Naive thymus-derived CD8-positive, alpha-beta T cell (primary cell): ENCODE measurements at regions of chr1 and their contacts with region 1.

Region 1: DNA sequence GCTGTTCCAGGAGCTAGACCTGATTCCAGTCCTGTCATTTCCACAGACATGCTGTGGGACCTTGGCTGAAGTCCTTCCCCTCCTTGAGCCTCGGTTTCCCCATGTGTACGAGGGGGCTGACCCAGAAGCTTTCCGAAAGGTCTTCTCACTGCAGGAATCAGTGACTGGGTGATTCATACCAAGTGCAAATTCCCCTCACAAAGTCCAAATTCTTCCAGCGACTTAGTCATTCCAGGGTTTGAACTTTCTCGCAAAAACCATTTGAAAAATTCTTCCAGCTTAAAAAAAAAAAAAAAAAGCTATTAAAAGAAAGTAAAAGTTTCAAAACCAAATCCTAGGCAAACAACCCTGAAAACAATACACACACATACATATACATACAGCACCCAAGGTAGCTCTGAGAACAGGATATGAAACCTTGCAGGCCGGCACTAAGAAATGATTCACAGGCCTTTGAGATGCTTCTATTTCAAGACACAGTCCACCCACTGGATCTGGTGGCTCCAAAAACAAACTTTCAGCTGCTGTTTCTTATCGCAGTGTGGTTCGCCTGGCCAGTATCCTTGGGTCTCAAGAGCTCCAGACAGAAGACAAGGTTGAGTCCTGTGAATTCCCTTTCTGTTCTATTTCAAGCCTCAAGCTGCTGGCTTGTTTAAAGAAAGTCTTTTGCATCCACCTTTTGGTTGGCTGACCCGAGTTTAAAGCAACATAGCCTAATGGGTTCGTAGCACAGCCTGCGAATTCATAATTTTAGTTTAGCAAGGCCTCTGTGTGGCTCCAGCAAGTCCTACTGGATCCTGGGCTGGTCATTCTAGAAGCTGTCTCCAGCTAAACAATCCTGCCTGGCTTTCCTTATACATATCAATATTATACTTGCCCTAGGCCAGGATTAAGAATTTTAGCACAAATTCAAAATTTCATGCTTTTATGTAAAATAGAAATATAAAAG is 18.0 kb upstream of the ID3 start:
- DNase-seq: no peak
- ATAC-seq: peak; percentile 68 to 78
- H3K4me3 Mint-ChIP-seq: peak overlapping the region; percentile 21 to 65 (median 58)
- H3K27ac Mint-ChIP-seq: peak overlapping the region; percentile 70 to 94 (median 86)
- H3K4me1 Mint-ChIP-seq: peaks cover 28 to 74% (median 69%) of the 10 kb centered on the region in 4 donors
- H3K27me3 Mint-ChIP-seq: no peaks in the 10 kb centered on the region

Region 2: DNA sequence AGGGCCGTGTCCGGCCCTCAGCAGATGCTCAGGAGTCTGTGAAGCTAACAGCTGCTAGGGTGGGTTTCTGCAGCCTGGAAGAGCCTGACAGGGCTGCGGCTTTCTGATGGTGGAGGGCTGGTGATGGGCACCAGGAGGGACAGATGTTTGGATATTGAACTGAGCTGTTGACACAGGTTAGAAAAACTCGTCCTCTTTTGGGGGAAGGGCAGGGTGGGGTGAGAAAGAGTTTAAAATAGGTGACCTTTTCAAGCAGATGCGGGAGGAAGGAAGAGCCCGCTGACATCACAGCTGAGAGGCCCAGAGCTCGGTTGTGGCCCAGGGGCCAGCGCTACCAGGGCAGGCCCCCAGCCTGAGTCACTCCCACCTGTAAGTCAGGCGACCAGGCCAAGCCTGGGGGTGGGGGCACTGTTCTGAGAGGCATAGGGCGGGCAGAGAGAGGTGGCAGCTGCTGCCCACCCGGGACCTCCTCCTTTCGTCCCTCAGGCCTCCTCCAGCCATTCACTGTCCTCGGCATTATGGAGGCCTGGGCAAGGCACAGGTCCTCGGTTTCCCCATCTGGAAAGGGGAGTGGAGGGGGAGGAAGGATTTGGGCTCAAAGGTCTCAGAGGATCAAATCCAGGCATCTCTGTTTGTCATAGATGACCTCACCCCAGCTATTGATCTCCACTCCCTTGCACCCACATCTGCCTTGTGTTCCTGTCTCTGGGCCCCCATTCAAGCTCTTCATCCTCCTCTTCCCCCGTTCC is 14.3 kb after region 1 on chr1:
- POLR2A ChIA-PET with region 1: interaction called, 44 read pairs
- DNase-seq: peak in 2 of 10 donors; percentile 49 to 79
- ATAC-seq: peak; percentile 43 to 60
- H3K4me3 Mint-ChIP-seq: peak overlapping the region; percentile 6 to 70 (median 58)
- H3K27ac Mint-ChIP-seq: peak overlapping the region; percentile 67 to 95 (median 84)
- H3K4me1 Mint-ChIP-seq: peaks cover 38 to 84% (median 71%) of the 10 kb centered on the region in 4 donors
- H3K27me3 Mint-ChIP-seq: no peaks in the 10 kb centered on the region

Region 3: DNA sequence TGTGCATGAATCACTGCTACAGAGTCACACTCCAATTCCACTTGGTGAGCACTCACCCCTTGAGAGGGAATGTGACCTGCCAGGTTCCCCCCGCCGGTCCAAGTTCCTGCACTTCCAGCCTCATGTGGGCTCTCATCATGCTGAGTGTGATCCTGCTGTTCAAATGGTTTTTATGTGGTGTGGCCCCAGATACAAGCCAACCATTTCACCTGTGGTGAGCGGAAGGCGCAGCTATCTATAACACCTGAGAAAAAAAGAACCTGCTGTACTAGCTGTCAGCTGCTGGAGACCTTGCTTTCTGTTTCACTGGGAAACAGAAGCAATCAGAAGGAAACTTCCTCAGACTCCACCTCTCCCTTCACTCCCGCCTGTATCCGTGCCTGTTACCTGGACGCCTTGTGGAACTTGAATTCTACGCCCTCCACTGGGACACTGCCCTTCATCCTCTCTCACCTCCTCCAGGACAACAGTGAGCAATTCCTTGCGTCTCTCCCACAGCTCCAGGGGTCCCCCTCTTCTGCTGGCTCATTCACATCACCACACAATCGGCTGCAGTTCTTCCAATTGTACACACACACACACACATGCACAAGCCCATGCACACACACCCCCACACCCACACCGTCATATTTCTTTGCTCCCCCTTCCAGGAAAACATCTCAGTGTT is 49.9 kb after region 1 on chr1:
- POLR2A ChIA-PET with region 1: interaction called, 11 read pairs
- DNase-seq: peak in 6 of 10 donors; percentile 25 to 72 (median 58)
- ATAC-seq: peak; percentile 79 to 88
- H3K4me3 Mint-ChIP-seq: peak overlapping the region; percentile 77 to 95 (median 91)
- H3K27ac Mint-ChIP-seq: peak overlapping the region; percentile 84 to 97 (median 94)
- H3K4me1 Mint-ChIP-seq: peaks cover 42 to 74% (median 72%) of the 10 kb centered on the region in 4 donors
- H3K27me3 Mint-ChIP-seq: no peaks in the 10 kb centered on the region